H1 (cell line): ENCODE measurements at regions of chr10 and their contacts with region 1.

Region 1: GRCh38 chr10:30384701-30385201 is 35.7 kb upstream of the MTPAP start:
- DNase-seq: no peak
- H3K4me3 ChIP-seq: no peak overlapping the region
- H3K27ac ChIP-seq: no peak overlapping the region
- H3K4me1 ChIP-seq: no peaks in the 10 kb centered on the region
- H3K27me3 ChIP-seq: no peaks in the 10 kb centered on the region
- CTCF ChIP-seq: peak; percentile 66 to 78 (median 71)
- EP300 ChIP-seq: no peak
- POLR2A ChIP-seq: no peak
- RAD21 ChIP-seq: peak; percentile 60 to 65

Region 2: GRCh38 chr10:30368065-30368718 is 16.6 kb before region 1 on chr10:
- CTCF ChIA-PET with region 1: interaction called, 23 read pairs
- POLR2A ChIA-PET with region 1: no interaction called
- DNase-seq: peak in 1 of 2 experiments; percentile 44
- H3K4me3 ChIP-seq: no peak overlapping the region
- H3K27ac ChIP-seq: no peak overlapping the region
- H3K4me1 ChIP-seq: peaks cover under 1 to 6% (median 6%) of the 10 kb centered on the region in 4 experiments
- H3K27me3 ChIP-seq: no peaks in the 10 kb centered on the region
- CTCF ChIP-seq: no peak
- EP300 ChIP-seq: no peak
- POLR2A ChIP-seq: no peak
- RAD21 ChIP-seq: no peak